Activated B cell treated with CpG ODN at 0.5 μM for 24 hours (primary cell): ENCODE measurements at regions of chr4 and their contacts with region 1.

Region 1: GRCh38 chr4:2837904-2838496 is 5.6 kb upstream of the ADD1 start:
- DNase-seq: peak; percentile 32
- ATAC-seq: peak; percentile 54
- H3K4me3 Mint-ChIP-seq: peak overlapping the region; percentile 74
- H3K27ac Mint-ChIP-seq: peak overlapping the region; percentile 81
- H3K4me1 Mint-ChIP-seq: peaks cover 74% of the 10 kb centered on the region
- H3K27me3 Mint-ChIP-seq: no peaks in the 10 kb centered on the region
- CTCF ChIP-seq: no peak

Region 2: DNA sequence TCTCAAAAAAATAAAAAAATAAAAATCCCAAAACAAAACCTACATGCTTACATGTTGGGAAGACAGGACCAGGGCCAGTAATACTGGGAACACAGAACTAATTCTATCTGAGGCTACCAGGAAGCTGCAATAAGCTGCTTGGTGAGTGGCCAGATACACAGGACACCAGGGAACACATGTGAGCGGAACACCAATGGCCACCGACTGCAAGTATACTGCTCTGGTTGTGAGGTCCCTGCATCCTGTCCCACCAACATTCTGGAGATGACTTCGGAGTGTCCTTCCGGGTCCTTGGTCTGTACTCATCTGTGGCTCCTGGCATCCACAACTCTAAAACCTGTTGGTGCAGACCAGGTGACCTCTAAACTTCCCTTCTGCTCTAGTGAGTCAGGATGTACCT is 84.6 kb before region 1 on chr4:
- CTCF ChIA-PET with region 1: no interaction called
- POLR2A ChIA-PET with region 1: no interaction called
- intact Hi-C with region 1: no loop called
- DNase-seq: no peak
- ATAC-seq: no peak
- H3K4me3 Mint-ChIP-seq: peak overlapping the region; percentile 32
- H3K27ac Mint-ChIP-seq: no peak overlapping the region
- H3K4me1 Mint-ChIP-seq: peaks cover 47% of the 10 kb centered on the region
- H3K27me3 Mint-ChIP-seq: no peaks in the 10 kb centered on the region
- CTCF ChIP-seq: no peak

Region 3: GRCh38 chr4:2800691-2801596 is 37.1 kb before region 1 on chr4:
- CTCF ChIA-PET with region 1: no interaction called
- POLR2A ChIA-PET with region 1: interaction called, 4 read pairs
- intact Hi-C with region 1: loop called (anchors 1 kb)
- DNase-seq: peak; percentile 60
- ATAC-seq: peak; percentile 79
- H3K4me3 Mint-ChIP-seq: peak overlapping the region; percentile 68
- H3K27ac Mint-ChIP-seq: peak overlapping the region; percentile 75
- H3K4me1 Mint-ChIP-seq: peaks cover 84% of the 10 kb centered on the region
- H3K27me3 Mint-ChIP-seq: no peaks in the 10 kb centered on the region
- CTCF ChIP-seq: no peak